T-cell (primary cell): ENCODE measurements at regions of chr12 and their contacts with region 1.

Region 1: GRCh38 chr12:113980537-113981337 is 14.6 kb upstream of the RBM19 start:
- DNase-seq: peak in 12 of 35 experiments; percentile 4 to 67 (median 9)
- ATAC-seq: peak in 1 of 4 experiments; percentile 41
- H3K4me3 ChIP-seq: no peak overlapping the region
- H3K4me3 Mint-ChIP-seq: no peak overlapping the region
- H3K27ac ChIP-seq: no peak overlapping the region
- H3K27ac Mint-ChIP-seq: no peak overlapping the region
- H3K4me1 ChIP-seq: no peaks in the 10 kb centered on the region
- H3K4me1 Mint-ChIP-seq: peaks cover 0 to 1% (median 0%) of the 10 kb centered on the region in 3 donors
- H3K27me3 ChIP-seq: peaks cover 0 to 40% of the 10 kb centered on the region in 2 experiments
- H3K27me3 Mint-ChIP-seq: peaks cover 32 to 46% of the 10 kb centered on the region in 2 donors

Region 2: DNA sequence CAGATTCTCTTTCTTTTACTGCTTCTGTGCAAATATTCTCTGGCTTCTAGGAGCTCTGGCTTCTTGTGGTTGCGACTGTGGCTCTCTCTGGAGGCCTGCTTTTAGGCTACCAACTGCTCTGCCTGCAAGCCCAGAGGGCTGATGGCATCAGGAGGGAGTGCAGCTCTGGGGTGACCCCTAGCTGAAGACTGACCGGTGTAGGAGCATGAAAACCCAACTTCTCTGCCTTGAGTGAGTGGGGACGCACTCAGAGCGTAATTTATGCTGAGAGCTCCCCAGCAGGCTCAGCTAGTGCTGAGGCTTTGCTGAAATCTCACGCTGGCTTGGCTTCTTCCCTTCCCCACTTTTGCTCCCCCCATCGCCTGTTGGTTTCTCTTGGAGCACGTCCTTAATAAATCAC is 15.3 kb after region 1 on chr12:
- CTCF ChIA-PET with region 1: no interaction called
- POLR2A ChIA-PET with region 1: no interaction called
- DNase-seq: no peak
- ATAC-seq: no peak
- H3K4me3 ChIP-seq: no peak overlapping the region
- H3K4me3 Mint-ChIP-seq: no peak overlapping the region
- H3K27ac ChIP-seq: no peak overlapping the region
- H3K27ac Mint-ChIP-seq: no peak overlapping the region
- H3K4me1 ChIP-seq: no peaks in the 10 kb centered on the region
- H3K4me1 Mint-ChIP-seq: no peaks in the 10 kb centered on the region
- H3K27me3 ChIP-seq: peaks cover 0 to 19% of the 10 kb centered on the region in 2 experiments
- H3K27me3 Mint-ChIP-seq: peaks cover 26 to 45% of the 10 kb centered on the region in 2 donors

Region 3: GRCh38 chr12:114054982-114055381 is 74.2 kb after region 1 on chr12:
- CTCF ChIA-PET with region 1: no interaction called
- POLR2A ChIA-PET with region 1: no interaction called
- DNase-seq: no peak
- ATAC-seq: no peak
- H3K4me3 ChIP-seq: no peak overlapping the region
- H3K4me3 Mint-ChIP-seq: no peak overlapping the region
- H3K27ac ChIP-seq: no peak overlapping the region
- H3K27ac Mint-ChIP-seq: no peak overlapping the region
- H3K4me1 ChIP-seq: no peaks in the 10 kb centered on the region
- H3K4me1 Mint-ChIP-seq: no peaks in the 10 kb centered on the region
- H3K27me3 ChIP-seq: no peaks in the 10 kb centered on the region
- H3K27me3 Mint-ChIP-seq: peaks cover 1 to 12% of the 10 kb centered on the region in 2 donors

Region 4: GRCh38 chr12:114508529-114509129 is 527.9 kb after region 1 on chr12:
- CTCF ChIA-PET with region 1: interaction called, 9 to 18 read pairs
- POLR2A ChIA-PET with region 1: no interaction called
- DNase-seq: peak in 33 of 35 experiments; percentile 6 to 71 (median 38)
- ATAC-seq: peak in 3 of 4 experiments; percentile 41 to 55 (median 46)
- H3K4me3 ChIP-seq: no peak overlapping the region
- H3K4me3 Mint-ChIP-seq: no peak overlapping the region
- H3K27ac ChIP-seq: no peak overlapping the region
- H3K27ac Mint-ChIP-seq: no peak overlapping the region
- H3K4me1 ChIP-seq: no peaks in the 10 kb centered on the region
- H3K4me1 Mint-ChIP-seq: no peaks in the 10 kb centered on the region
- H3K27me3 ChIP-seq: no peaks in the 10 kb centered on the region
- H3K27me3 Mint-ChIP-seq: peaks cover 11 to 20% of the 10 kb centered on the region in 2 donors

Region 5: DNA sequence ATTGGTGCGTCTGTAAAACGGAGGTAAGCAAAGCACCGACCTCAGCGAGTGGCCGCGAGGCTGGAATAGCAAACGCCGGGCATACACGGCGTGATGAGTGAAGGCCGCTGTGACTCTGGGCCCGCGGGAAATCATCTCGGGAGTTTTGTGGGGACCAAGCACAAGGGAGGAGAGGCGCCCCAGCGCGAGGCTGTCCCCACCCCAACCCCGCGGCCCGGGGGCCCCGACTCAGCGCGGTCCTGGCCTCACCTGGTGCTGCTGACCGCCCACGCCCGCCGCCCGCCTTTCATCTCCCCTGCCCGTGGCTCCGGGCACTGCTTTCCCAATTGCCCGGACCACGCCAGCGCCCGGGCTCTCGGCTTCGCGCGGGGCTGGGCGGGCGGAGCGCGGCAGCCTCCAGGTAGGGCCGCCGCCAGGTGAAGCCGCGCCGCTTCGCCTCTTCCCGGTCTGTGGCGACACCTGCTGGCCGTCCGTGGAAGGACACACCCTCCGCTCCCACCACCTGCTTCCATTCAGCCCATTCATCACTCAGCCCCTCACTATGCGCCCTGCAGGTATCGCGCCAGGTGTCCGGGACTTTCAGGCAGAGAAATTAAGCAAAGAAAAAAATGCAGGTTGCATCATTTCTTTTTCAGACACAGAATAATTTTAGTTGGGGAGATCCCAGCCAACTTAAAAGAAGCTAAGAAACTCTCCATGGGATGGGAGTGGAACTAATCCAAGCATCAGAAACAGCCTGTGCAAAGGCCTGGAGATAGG is 1936.4 kb after region 1 on chr12:
- CTCF ChIA-PET with region 1: interaction called, 10 to 11 read pairs
- POLR2A ChIA-PET with region 1: no interaction called
- DNase-seq: peak; percentile 27 to 79 (median 65)
- ATAC-seq: peak; percentile 76 to 85 (median 82)
- H3K4me3 ChIP-seq: peak overlapping the region in 1 of 2 donors; percentile 7
- H3K4me3 Mint-ChIP-seq: peak overlapping the region in 1 of 3 donors; percentile 32
- H3K27ac ChIP-seq: no peak overlapping the region
- H3K27ac Mint-ChIP-seq: no peak overlapping the region
- H3K4me1 ChIP-seq: peaks cover 0 to 4% of the 10 kb centered on the region in 2 experiments
- H3K4me1 Mint-ChIP-seq: peaks cover 0 to 5% (median 0%) of the 10 kb centered on the region in 3 donors
- H3K27me3 ChIP-seq: peaks cover 5 to 27% of the 10 kb centered on the region in 2 experiments
- H3K27me3 Mint-ChIP-seq: peaks cover 53 to 62% of the 10 kb centered on the region in 2 donors